Kidney (tissue), 22 donors: ENCODE measurements at regions of chr15 and their contacts with region 1.

Region 1: GRCh38 chr15:49421991-49422390 is 1.1 kb upstream of the FGF7 start:
- DNase-seq: peak; percentile 29 to 89 (median 49)
- H3K4me3 ChIP-seq: peak overlapping the region in 2 of 3 donors; percentile 14 to 59
- H3K27ac ChIP-seq: no peak overlapping the region
- H3K4me1 ChIP-seq: no peaks in the 10 kb centered on the region
- H3K27me3 ChIP-seq: no peaks in the 10 kb centered on the region
- CTCF ChIP-seq: peak; percentile 77

Region 2: GRCh38 chr15:49235446-49236124 is 186.4 kb before region 1 on chr15:
- intact Hi-C with region 1: loop called (anchors 10 kb)
- DNase-seq: peak in 4 of 5 donors; percentile 71 to 93 (median 88)
- H3K4me3 ChIP-seq: no peak overlapping the region
- H3K27ac ChIP-seq: no peak overlapping the region
- H3K4me1 ChIP-seq: peaks cover 0 to 20% (median 2%) of the 10 kb centered on the region in 3 donors
- H3K27me3 ChIP-seq: no peaks in the 10 kb centered on the region
- CTCF ChIP-seq: peak; percentile 76